ENCODE measurements at regions of chr1 and their contacts with region 1.

Region 1: DNA sequence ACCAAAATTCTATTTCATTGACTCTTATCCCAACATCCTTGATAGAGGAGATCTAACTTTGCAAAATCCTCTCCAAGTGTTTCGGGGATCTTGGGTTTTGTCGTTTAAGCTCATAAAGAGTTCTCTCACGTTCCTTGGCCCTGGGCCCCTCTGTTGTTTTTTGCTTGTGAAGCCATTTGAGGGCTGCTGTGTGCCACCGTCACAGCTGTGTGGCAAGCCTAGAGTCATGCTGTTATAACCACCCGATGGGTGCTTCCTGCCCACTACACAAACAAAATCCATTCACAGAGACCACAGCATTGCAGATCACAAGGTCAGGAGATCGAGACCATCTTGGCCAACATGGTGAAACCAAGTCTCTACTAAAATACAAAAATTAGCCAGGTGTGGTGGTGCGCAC is 154.1 kb downstream of the ADSS2 start:
- DNase-seq: no peak
- H3K4me3 Mint-ChIP-seq: no peak overlapping the region
- H3K27ac Mint-ChIP-seq: no peak overlapping the region
- H3K4me1 Mint-ChIP-seq: peaks cover 18% of the 10 kb centered on the region
- H3K27me3 Mint-ChIP-seq: peaks cover 5% of the 10 kb centered on the region

Region 2: GRCh38 chr1:244272471-244273261 is 24.9 kb before region 1 on chr1:
- CTCF ChIA-PET with region 1: interaction called, 22 read pairs
- DNase-seq: peak; percentile 77
- H3K4me3 Mint-ChIP-seq: no peak overlapping the region
- H3K27ac Mint-ChIP-seq: no peak overlapping the region
- H3K4me1 Mint-ChIP-seq: peaks cover 8% of the 10 kb centered on the region
- H3K27me3 Mint-ChIP-seq: peaks cover 13% of the 10 kb centered on the region

Region 3: DNA sequence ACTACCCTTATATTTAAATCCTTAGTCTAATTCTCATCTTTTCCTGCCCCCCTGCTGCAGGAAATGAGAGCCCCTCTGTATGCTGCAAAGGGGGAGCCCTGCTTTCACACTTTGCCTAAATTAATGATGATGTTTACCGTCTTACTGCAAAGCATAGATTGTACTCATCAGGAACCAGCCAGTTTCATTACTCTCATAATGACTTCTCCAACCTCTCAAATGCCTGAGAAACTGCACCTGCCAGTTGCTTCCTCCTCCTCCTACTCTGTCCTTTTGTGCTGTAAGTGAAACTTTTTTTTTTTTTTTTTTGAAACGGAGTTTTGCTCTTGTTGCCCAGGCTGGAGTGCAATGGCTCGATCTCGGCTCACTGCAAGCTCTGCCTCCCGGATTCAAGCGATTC is 52.4 kb after region 1 on chr1:
- CTCF ChIA-PET with region 1: no interaction called
- DNase-seq: no peak
- H3K4me3 Mint-ChIP-seq: no peak overlapping the region
- H3K27ac Mint-ChIP-seq: no peak overlapping the region
- H3K4me1 Mint-ChIP-seq: peaks cover 6% of the 10 kb centered on the region
- H3K27me3 Mint-ChIP-seq: peaks cover 6% of the 10 kb centered on the region

Measured in activated naive CD4-positive, alpha-beta T cell treated with anti-CD3 and anti-CD28 coated beads, Interleukin-2, amount 10 ng/mL, durations not matched to agents 7 days and 5 days (primary cell).